Tibial artery (tissue), 4 donors: ENCODE measurements at regions of chr15 and their contacts with region 1.

Region 1: GRCh38 chr15:65184868-65185738 is at the start of gene CLPX:
- DNase-seq: peak; percentile 92 to 98
- H3K4me3 ChIP-seq: peak within 1 kb of the TSS; percentile 77 to 93
- H3K27ac ChIP-seq: peak within 1 kb of the TSS; percentile 94 to 97
- H3K4me1 ChIP-seq: peaks cover 0 to 35% (median 16%) of the 10 kb centered on the region in 4 donors
- H3K27me3 ChIP-seq: no peaks in the 10 kb centered on the region
- CTCF ChIP-seq: no peak

Region 2: GRCh38 chr15:65094294-65094995 is 90.7 kb before region 1 on chr15:
- intact Hi-C with region 1: no loop called
- DNase-seq: peak in 1 of 2 donors; percentile 93
- H3K4me3 ChIP-seq: no peak overlapping the region
- H3K27ac ChIP-seq: peak overlapping the region; percentile 95 to 96
- H3K4me1 ChIP-seq: peaks cover 7 to 75% (median 54%) of the 10 kb centered on the region in 4 donors
- H3K27me3 ChIP-seq: no peaks in the 10 kb centered on the region
- CTCF ChIP-seq: no peak

Region 3: DNA sequence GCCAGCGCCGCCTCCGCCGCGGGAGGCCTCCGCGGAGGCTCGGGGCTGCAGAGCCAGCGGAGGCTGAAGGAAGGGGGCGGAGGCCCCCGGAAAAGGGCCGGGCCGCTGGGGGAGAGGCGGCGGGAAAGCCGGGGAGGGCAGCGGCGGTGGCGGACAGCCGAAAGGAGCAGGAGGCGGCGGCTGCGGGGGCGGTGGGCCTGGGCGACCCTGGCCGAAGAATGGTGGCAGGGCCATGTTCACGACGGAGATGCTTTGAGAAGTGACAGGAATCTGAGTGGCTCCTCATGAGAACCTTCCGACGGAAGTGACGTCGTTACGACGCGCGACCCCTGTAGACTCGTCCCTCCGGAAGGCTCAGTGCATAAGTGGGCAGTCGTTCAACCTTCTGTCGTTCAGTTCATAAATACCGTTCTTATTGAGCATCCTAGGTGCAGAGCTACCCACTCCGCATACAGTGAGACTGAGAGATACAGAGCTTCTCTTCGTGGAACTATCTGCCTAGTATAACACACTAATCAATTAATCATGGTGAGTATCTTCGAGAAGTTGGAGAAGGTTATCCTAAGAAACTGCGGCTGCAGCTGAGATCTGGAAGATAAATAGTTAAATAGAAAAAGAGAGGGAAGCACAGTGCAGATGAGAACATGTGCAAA is 51.4 kb before region 1 on chr15 and contains the start of gene PDCD7:
- intact Hi-C with region 1: loop called (anchors 10 kb)
- DNase-seq: peak; percentile 88 to 90
- H3K4me3 ChIP-seq: peak within 1 kb of the TSS; percentile 84 to 95
- H3K27ac ChIP-seq: peak within 1 kb of the TSS; percentile 90 to 91
- H3K4me1 ChIP-seq: peaks cover 0 to 33% (median 20%) of the 10 kb centered on the region in 4 donors
- H3K27me3 ChIP-seq: no peaks in the 10 kb centered on the region
- CTCF ChIP-seq: no peak